Activated CD4-positive, alpha-beta T cell treated with anti-CD3 and anti-CD28 coated beads for 36 hours (primary cell): ENCODE measurements at regions of chr2 and their contacts with region 1.

Region 1: GRCh38 chr2:14903709-14904374 is 271.3 kb downstream of the LRATD1 start:
- DNase-seq: peak; percentile 79
- ATAC-seq: peak; percentile 91
- H3K4me3 Mint-ChIP-seq: no peak overlapping the region
- H3K27ac Mint-ChIP-seq: no peak overlapping the region
- H3K4me1 Mint-ChIP-seq: no peaks in the 10 kb centered on the region
- H3K27me3 Mint-ChIP-seq: no peaks in the 10 kb centered on the region

Region 2: DNA sequence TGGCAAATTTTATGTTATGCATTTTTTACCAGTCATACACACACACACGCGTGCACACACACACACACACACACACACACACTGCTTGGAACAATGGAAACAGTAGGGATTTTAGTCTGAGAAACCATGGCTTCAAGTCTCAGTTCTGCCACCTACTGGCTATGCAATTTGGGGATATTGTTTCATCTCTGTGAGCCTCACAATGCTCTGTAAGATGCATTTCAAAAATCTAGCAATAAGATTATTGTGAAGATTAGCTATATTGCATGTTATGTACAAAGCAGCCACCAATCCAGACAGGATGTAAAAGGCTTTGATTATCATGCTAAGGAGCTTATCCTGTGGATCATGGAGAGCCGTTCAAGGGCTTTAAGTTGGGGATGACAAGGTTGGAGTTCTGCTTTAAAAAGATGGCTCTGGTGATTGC is 255.9 kb after region 1 on chr2:
- CTCF ChIA-PET with region 1: no interaction called
- POLR2A ChIA-PET with region 1: no interaction called
- intact Hi-C with region 1: loop called in 1 of 2 experiments (anchors 5 kb)
- DNase-seq: peak; percentile 29
- ATAC-seq: peak; percentile 61
- H3K4me3 Mint-ChIP-seq: no peak overlapping the region
- H3K27ac Mint-ChIP-seq: no peak overlapping the region
- H3K4me1 Mint-ChIP-seq: peaks cover 9% of the 10 kb centered on the region
- H3K27me3 Mint-ChIP-seq: peaks cover 13% of the 10 kb centered on the region

Region 3: GRCh38 chr2:15568874-15569273 is 665.0 kb after region 1 on chr2:
- CTCF ChIA-PET with region 1: no interaction called
- POLR2A ChIA-PET with region 1: no interaction called
- intact Hi-C with region 1: no loop called
- DNase-seq: no peak
- ATAC-seq: no peak
- H3K4me3 Mint-ChIP-seq: no peak overlapping the region
- H3K27ac Mint-ChIP-seq: no peak overlapping the region
- H3K4me1 Mint-ChIP-seq: no peaks in the 10 kb centered on the region
- H3K27me3 Mint-ChIP-seq: peaks cover 2% of the 10 kb centered on the region